ENCODE measurements at regions of chr19 and their contacts with region 1.

Region 1: DNA sequence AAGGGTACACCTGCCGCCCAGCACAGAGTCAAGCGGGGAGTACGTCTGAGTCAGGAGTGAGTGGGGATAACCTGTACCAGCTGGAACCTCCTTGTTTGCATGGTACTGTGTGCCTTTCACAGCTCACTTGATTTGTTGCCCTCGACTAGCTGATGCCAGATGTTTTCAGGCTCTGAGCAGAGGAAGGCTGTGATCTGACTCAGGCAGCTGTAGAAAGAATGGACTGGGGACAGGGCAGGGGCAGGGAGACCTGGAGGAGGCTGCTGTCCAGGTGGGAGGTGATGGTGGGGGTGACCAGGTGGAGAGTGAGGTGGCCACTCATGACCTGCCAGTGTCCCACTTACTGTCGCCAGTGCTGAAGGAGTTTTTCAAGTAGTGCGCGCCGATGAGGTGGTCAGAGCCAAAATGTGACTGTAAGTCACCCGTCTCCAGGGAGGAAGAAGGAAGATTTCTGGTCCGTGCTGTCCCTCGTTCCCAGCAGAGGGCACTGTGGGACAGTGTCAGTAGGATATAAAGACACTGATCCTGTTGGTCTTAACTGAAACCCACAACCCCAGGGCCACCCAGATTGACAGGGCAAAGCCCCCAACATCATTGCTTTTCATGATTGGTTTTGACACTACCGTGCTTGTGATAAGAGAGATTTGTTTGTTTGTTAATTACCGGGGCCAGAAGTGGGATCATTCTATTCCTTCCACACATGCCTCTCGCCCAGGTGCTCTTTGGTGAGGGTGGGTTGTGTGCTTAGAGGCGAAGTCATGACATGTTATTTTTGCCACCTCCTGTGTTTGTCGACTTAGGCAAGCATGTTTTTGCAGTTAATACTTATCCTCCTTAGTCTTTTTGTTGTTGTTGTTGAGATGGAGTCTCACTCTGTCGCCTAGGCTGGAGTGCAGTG is 128.4 kb downstream of the DPF1 start:
- DNase-seq: peak; percentile 21 to 43
- ATAC-seq: peak; percentile 39 to 81
- H3K4me3 ChIP-seq: no peak overlapping the region
- H3K27ac ChIP-seq: no peak overlapping the region
- H3K4me1 ChIP-seq: peaks cover 0 to under 1% of the 10 kb centered on the region in 2 donors
- H3K27me3 ChIP-seq: no peaks in the 10 kb centered on the region
- CTCF ChIP-seq: peak; percentile 38 to 68 (median 61)
- POLR2A ChIP-seq: no peak

Region 2: GRCh38 chr19:37893845-37894575 is 201.7 kb before region 1 on chr19:
- in situ Hi-C with region 1: loop called in 1 of 4 experiments (anchors 10 kb)
- intact Hi-C with region 1: no loop called
- DNase-seq: no peak
- ATAC-seq: no peak
- H3K4me3 ChIP-seq: no peak overlapping the region
- H3K27ac ChIP-seq: no peak overlapping the region
- H3K4me1 ChIP-seq: no peaks in the 10 kb centered on the region
- H3K27me3 ChIP-seq: no peaks in the 10 kb centered on the region
- CTCF ChIP-seq: no peak
- POLR2A ChIP-seq: no peak

Region 3: DNA sequence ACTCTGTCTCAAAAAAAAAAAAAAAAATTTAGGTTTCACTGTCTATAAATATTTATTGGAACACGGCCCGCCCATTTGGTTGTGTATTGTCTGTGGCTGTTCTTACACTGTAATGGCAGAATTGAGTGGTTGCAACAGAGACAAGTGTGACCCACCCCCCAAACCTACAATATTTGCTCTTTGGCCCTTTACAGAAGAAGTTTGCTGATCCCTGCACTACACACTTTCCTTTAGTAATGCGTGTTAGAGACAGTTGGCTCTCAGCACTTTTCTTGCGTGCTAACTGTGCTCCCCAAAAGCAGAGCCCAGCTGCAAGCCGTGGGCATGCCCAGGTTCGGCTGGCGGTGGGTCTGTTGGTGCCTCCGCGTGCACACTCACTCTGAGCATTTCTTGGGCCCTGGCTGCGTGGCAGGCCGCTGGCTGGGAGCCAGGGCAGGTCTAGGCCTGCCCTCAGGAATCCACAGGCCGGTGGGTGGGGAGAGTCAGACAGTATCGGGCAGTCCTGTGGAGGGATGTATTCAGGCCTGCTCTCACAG is 116.0 kb before region 1 on chr19:
- in situ Hi-C with region 1: no loop called
- intact Hi-C with region 1: no loop called
- DNase-seq: no peak
- ATAC-seq: no peak
- H3K4me3 ChIP-seq: no peak overlapping the region
- H3K27ac ChIP-seq: no peak overlapping the region
- H3K4me1 ChIP-seq: peaks cover 12 to 17% of the 10 kb centered on the region in 2 donors
- H3K27me3 ChIP-seq: no peaks in the 10 kb centered on the region
- CTCF ChIP-seq: no peak
- POLR2A ChIP-seq: no peak